ENCODE measurements at regions of chr6 and their contacts with region 1.

Region 1: GRCh38 chr6:109526905-109527628 is 44.0 kb upstream of the ZBTB24 start:
- DNase-seq: peak; percentile 78
- ATAC-seq: peak; percentile 92
- H3K4me3 ChIP-seq: no peak overlapping the region
- H3K27ac ChIP-seq: no peak overlapping the region
- H3K4me1 ChIP-seq: peaks cover 4% of the 10 kb centered on the region; the same call in 1 of the 2 replicates
- H3K27me3 ChIP-seq: no peaks in the 10 kb centered on the region
- CTCF ChIP-seq: peak; percentile 76

Region 2: DNA sequence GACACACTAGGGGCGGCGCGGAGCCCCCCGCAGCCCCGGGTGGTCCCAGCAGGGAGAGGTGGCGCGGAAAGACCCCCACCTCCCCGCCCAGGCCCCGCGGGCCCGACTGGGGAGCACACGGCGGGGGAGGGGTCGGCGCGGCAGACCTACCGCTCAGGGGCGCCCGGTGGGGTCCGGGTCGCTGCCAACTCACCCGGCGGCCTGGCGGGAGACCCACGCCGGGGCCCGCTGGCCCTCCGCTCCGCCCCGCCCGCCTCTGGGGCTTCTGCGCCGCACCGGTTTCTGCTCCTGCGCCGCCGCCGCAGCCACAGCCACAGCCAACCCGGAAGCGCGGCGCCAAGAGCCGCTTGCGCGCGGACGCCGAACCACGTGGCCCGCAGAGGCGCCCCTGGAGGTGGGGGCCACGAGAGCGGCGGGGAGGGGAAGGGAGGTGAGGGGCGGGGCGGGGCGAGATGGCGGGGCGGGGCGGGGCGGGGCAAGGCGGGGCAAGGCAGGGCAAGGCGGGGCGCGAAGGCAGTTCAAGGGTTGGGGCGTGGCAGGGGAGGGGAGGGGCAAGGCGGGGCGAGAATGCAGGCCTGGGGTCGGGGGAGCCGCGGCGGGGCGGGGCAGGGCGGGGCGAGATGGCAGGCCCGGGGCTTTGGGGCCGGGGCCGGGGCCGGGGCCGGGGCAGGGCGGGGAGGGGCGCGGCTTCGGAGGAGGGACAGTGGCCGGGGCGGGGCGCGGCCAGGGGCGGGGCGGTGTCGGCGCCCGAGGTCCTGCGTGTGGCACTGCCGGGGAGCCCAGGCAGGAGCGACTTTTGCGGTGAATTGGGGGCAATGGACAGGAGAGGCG is 43.9 kb before region 1 on chr6 and contains the start of gene ZBTB24:
- CTCF ChIA-PET with region 1: no interaction called
- POLR2A ChIA-PET with region 1: interaction called, 3 read pairs
- intact Hi-C with region 1: loop called (anchors 5 kb)
- DNase-seq: peak; percentile 84
- ATAC-seq: peak; percentile 71
- H3K4me3 ChIP-seq: peak within 1 kb of the TSS; percentile 90
- H3K27ac ChIP-seq: peak within 1 kb of the TSS; percentile 36
- H3K4me1 ChIP-seq: peaks cover 42% of the 10 kb centered on the region
- H3K27me3 ChIP-seq: no peaks in the 10 kb centered on the region
- CTCF ChIP-seq: no peak
- total RNA-seq, gene ZBTB24: 4.5 and 6.1 TPM in 2 replicates

Region 3: GRCh38 chr6:109690737-109691621 is 163.9 kb after region 1 on chr6 and contains the starts of genes AK9 and FIG4:
- CTCF ChIA-PET with region 1: no interaction called
- POLR2A ChIA-PET with region 1: no interaction called
- intact Hi-C with region 1: loop called (anchors 2 kb)
- DNase-seq: peak; percentile 90
- ATAC-seq: peak; percentile 95
- H3K4me3 ChIP-seq: peak within 1 kb of the TSS; percentile 93
- H3K27ac ChIP-seq: peak within 1 kb of the TSS; percentile 33
- H3K4me1 ChIP-seq: peaks cover 23% of the 10 kb centered on the region
- H3K27me3 ChIP-seq: no peaks in the 10 kb centered on the region
- CTCF ChIP-seq: peak; percentile 30; the same call in 1 of the 2 replicates
- total RNA-seq, gene AK9: 1.7 and 3.5 TPM in 2 replicates
- total RNA-seq, gene FIG4: 5.7 and 6.0 TPM in 2 replicates

Region 4: DNA sequence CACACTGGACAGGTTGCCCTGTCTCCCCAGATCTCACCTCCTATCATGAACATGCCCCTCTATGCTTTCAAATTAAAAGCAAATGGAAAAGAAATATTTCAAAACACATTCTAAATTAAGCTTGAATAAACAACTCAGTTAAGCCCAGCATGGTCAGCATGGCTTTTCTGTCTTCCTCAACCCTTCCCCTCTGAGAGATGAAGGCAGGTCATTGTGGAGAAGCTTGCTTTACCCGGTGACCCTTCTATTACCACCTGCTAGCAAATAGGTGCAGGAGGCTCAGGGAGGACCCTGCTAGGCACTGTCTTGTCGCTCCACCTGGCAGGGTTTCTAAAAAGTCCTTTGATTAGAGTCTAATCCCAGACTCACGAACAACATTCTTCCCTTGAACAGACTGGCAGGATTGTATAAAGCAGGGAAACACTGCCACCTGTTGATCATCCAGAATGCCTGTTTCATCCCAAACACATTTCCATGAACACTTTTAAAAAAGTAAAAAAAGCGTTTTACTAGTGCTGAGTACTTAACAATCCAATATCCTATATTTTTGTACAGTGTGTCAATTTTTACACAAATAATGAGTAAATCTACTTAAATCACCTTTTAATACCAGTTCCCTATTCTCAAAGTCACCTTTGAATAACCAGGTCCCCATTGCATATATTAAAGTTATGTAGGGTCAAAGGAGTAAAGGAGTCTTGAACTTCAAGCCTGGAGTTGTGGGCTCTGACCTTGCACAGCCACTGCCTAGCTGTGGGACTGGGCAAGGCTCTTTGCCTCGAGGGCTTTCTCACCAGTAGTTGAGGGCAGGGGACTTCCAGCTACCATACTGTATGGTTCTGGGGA is 526.6 kb after region 1 on chr6:
- CTCF ChIA-PET with region 1: no interaction called
- POLR2A ChIA-PET with region 1: no interaction called
- intact Hi-C with region 1: loop called (anchors 1 kb)
- DNase-seq: peak; percentile 46
- ATAC-seq: peak; percentile 79
- H3K4me3 ChIP-seq: no peak overlapping the region
- H3K27ac ChIP-seq: no peak overlapping the region
- H3K4me1 ChIP-seq: no peaks in the 10 kb centered on the region
- H3K27me3 ChIP-seq: peaks cover 16% of the 10 kb centered on the region; the same call in 1 of the 2 replicates
- CTCF ChIP-seq: peak; percentile 76

Region 5: DNA sequence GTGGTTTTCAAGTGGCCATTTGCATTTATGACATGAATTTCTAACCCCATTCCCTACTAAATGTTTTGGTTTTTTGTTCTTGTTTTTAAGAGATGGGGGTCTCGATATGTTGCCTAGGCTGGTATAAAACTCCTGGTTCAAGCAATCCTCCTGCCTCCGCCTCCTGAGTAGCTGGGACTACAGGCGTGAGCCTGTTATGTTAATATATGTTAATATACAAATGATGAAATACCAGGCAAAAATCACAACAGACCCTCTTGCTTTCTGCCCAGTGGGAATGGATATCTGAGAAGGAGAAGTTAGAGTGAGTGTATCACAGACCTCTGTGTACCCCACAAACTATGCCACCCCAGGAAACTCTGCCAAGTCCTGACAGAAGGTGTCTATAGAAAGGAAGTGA is 719.3 kb after region 1 on chr6:
- CTCF ChIA-PET with region 1: no interaction called
- POLR2A ChIA-PET with region 1: no interaction called
- intact Hi-C with region 1: no loop called
- DNase-seq: no peak
- ATAC-seq: no peak
- H3K4me3 ChIP-seq: no peak overlapping the region
- H3K27ac ChIP-seq: no peak overlapping the region
- H3K4me1 ChIP-seq: no peaks in the 10 kb centered on the region
- H3K27me3 ChIP-seq: no peaks in the 10 kb centered on the region
- CTCF ChIP-seq: no peak

Measured in PC-3 (cell line).